HepG2 (cell line): ENCODE measurements at regions of chr16 and their contacts with region 1.

Region 1: DNA sequence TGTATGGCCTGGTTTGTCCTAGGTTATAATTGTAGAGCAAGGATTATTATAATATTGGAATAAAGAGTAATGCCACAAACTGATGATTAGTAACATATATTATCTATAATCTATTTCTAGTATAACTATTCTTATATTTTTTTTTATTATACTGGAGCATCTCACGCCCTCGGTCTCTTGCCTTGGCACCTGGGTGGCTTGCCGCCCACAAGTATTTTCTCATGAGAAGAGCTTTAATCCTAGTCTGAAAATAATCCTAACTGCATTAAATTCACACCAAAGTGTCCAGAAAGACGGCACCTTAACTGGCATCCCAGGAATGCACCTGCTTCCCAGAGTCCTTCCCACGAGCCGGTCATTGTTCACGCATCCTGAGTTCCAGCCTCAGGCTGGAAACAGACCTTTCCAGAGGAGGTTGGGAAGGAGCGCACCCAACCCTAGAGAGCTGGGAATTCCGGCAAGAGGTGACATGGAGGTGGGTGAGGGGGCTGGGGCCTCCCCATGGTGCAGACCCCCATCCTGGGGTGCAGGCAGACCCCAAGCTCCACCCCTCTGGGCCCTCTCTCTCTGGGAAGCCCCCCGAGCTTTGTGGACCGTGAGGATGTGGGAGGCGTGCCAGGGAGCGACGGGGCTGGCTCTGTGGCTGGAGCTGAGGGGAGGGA is 15.9 kb downstream of the CHMP1A start:
- DNase-seq: no peak
- ATAC-seq: no peak
- H3K4me3 ChIP-seq: 0 out of 6 replicates have a peak overlapping the region, but pooled peaks of 1 of the 3 experiments have one; percentile 67
- H3K27ac ChIP-seq: no peak overlapping the region
- H3K4me1 ChIP-seq: peaks cover 18% of the 10 kb centered on the region
- H3K27me3 ChIP-seq: no peaks in the 10 kb centered on the region
- CTCF ChIP-seq: no peak
- EP300 ChIP-seq: no peak
- POLR2A ChIP-seq: no peak
- RAD21 ChIP-seq: no peak

Region 2: GRCh38 chr16:89602273-89602951 is 39.2 kb before region 1 on chr16:
- CTCF ChIA-PET with region 1: interaction called, 16 read pairs
- POLR2A ChIA-PET with region 1: no interaction called
- in situ Hi-C with region 1: loop called (anchors 5 kb)
- intact Hi-C with region 1: loop called (anchors 1 kb)
- DNase-seq: no peak
- ATAC-seq: peak; percentile 47
- H3K4me3 ChIP-seq: peak overlapping the region in 1 of 3 experiments; percentile 6; a peak in 1 of 6 replicates
- H3K27ac ChIP-seq: no peak overlapping the region
- H3K4me1 ChIP-seq: peaks cover 24% of the 10 kb centered on the region
- H3K27me3 ChIP-seq: peaks cover 9 to 22% of the 10 kb centered on the region in 2 experiments
- CTCF ChIP-seq: no peak
- EP300 ChIP-seq: no peak
- POLR2A ChIP-seq: no peak
- RAD21 ChIP-seq: no peak

Region 3: GRCh38 chr16:89615596-89616090 is 25.9 kb before region 1 on chr16:
- CTCF ChIA-PET with region 1: interaction called, 34 read pairs
- POLR2A ChIA-PET with region 1: no interaction called
- in situ Hi-C with region 1: no loop called
- intact Hi-C with region 1: loop called (anchors 1 kb)
- DNase-seq: no peak
- ATAC-seq: peak; percentile 73
- H3K4me3 ChIP-seq: peak overlapping the region in 1 of 3 experiments; percentile 48; a peak in 1 of 6 replicates
- H3K27ac ChIP-seq: no peak overlapping the region
- H3K4me1 ChIP-seq: peaks cover 45% of the 10 kb centered on the region
- H3K27me3 ChIP-seq: peaks cover 5 to 20% of the 10 kb centered on the region in 2 experiments; a peak in 2 of 5 replicates
- CTCF ChIP-seq: peak; percentile 98
- EP300 ChIP-seq: no peak
- POLR2A ChIP-seq: no peak
- RAD21 ChIP-seq: peak; percentile 94